ENCODE measurements at regions of chr14 and their contacts with region 1.

Region 1: DNA sequence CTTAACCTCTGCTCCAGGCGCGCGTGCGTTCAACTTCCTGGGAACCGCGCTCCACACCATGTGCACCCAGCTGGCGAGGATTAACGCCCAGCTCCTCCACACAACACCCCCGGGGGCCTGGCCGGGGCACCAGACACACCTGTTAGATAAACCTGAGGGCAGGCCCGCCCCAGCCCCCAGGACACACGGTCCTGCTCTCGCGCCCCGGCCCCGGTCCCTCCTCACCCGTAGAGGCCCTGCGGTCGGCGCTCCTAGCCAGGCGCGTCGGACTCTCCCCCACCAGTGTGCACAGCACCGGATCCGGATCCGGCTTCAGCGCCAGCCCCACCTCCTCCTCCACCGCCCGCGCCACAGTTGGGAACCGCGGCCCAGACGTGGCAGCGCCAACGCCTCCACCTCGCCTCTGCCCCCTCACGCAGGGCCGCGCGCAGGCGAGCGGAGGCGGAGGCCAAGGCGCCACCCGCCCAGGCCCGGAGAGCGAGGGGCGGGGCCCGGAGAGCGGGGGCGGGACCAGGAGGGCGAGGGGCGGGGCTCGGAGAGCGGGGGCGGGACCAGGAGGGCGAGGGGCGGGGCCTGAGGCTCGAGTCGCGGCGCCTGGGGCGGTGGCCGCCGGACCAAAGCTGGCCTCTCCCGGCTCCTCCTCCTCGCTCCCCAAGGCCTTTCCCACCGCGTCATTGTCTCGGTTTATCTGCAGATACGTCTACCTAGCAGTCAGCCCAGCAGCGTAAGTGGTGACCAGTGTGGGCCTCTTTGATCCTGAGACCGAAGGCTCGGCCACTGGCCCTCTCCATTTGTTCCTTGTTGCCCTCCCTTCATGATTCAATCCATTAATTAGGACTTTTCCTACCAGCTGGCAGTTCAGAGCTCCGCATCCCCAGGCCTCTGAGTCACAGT is at the start of gene GNPNAT1:
- DNase-seq: peak; percentile 88
- H3K4me3 Mint-ChIP-seq: peak within 1 kb of the TSS; percentile 94
- H3K27ac Mint-ChIP-seq: peak within 1 kb of the TSS; percentile 54
- H3K4me1 Mint-ChIP-seq: peaks cover 41% of the 10 kb centered on the region
- H3K27me3 Mint-ChIP-seq: no peaks in the 10 kb centered on the region
- total RNA-seq, gene GNPNAT1: 30.4 to 31.4 TPM

Region 2: DNA sequence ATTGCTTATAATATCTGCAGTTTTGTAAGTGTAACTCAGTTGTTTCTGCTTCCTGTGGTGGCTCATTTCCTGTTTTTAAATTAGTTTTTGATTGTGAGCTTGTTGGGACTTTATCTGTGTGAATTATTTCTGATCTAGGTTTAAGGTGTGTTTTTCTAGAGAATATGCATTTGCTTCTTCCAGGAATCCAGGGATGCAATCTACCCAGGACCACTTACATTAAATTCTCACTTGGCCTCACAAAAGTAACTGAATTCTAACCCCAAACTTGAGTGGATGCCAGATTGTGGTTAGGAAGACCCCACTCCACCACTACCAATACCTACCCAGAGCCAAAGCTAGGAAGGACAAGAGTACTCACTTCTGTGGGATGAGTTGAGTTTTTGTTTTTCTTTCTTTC is 49.6 kb before region 1 on chr14:
- CTCF ChIA-PET with region 1: no interaction called
- POLR2A ChIA-PET with region 1: no interaction called
- intact Hi-C with region 1: loop called (anchors 2 kb)
- DNase-seq: no peak
- H3K4me3 Mint-ChIP-seq: peak overlapping the region; percentile 73
- H3K27ac Mint-ChIP-seq: peak overlapping the region; percentile 98
- H3K4me1 Mint-ChIP-seq: peaks cover 68% of the 10 kb centered on the region
- H3K27me3 Mint-ChIP-seq: no peaks in the 10 kb centered on the region